ENCODE measurements at regions of chr13 and their contacts with region 1.

Region 1: DNA sequence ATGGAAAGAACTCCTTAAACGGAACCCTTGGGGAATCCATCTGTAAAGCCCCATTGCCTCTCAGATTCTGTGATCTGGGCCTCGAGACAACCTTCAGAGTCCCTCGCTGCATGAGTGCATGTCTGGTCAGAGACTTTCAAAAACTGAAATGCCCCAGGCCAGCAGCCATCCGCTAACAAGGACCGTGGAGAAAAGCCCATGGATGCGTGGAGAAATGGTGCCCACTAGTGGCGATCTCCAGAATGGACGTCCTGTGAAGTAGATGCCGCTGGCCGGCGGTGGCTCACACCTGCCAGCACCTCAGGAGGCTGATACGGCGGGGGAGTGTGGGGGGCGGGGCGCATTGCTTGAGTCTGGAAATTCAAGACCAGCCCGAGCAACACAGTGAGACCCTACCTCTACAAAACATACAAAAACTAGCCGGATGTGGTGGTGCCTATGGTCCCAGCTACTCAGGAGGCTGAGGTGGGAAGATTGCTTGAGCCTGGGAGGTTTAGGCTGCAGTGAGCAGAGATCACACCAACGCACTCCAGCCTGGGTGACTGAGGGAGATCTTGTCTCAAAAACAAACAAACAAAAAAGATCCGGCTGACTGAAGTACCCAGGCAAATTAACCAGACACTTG is 7.9 kb upstream of the CDC16 start:
- DNase-seq: peak; percentile 80 to 90
- ATAC-seq: peak; percentile 94 to 97 (median 96)
- H3K4me3 ChIP-seq: no peak overlapping the region
- H3K27ac ChIP-seq: no peak overlapping the region
- H3K4me1 ChIP-seq: peaks cover 3% of the 10 kb centered on the region
- H3K27me3 ChIP-seq: peaks cover 0 to 20% (median 2%) of the 10 kb centered on the region in 3 donors
- CTCF ChIP-seq: peak; percentile 90

Region 2: DNA sequence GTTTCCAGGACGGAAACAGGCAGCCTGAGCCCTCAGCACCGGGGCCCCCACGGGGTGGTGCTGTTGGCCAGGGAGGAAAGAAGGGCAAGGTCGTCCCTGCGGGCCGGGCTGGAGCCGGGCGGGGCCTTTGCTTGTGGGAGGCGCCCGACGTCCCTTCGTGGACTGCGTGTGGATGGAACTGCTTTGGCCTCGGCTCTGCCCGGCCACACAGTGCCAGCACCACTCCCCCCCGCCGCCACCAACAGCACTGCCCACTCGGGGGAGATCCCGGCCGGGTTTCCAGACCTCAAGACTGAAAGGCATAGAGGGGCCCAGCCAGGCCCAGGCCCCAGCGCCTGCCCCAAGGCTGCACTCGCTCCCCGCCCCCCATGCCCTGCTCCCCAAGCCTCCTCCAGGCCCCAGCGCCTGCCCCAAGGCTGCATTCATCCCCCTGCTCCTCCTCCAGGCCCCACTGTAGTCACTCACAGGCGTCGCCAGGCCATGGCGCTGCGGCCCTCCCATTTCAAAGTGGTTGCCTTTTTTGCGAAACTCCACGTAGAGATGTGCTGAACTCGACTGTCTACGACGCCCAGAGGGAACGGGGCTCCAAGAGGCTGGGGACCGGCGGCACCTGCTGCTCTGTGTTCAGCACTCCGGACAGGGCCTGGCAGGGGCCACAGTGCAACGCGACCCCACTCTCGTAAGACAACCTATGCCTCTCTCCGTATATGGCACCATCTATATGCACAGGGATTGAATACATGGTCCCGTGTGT is 275.4 kb before region 1 on chr13:
- intact Hi-C with region 1: loop called (anchors 1 to 2 kb)
- DNase-seq: peak; percentile 89 to 95
- ATAC-seq: peak; percentile 91 to 97 (median 94)
- H3K4me3 ChIP-seq: peak overlapping the region; percentile 38
- H3K27ac ChIP-seq: no peak overlapping the region
- H3K4me1 ChIP-seq: peaks cover 5% of the 10 kb centered on the region
- H3K27me3 ChIP-seq: no peaks in the 10 kb centered on the region
- CTCF ChIP-seq: peak; percentile 86

Region 3: GRCh38 chr13:113969973-113970611 is 256.7 kb before region 1 on chr13:
- intact Hi-C with region 1: loop called in 1 of 2 experiments (anchors 5 kb)
- DNase-seq: peak in 1 of 2 donors; percentile 36
- ATAC-seq: peak; percentile 12 to 24 (median 17)
- H3K4me3 ChIP-seq: no peak overlapping the region
- H3K27ac ChIP-seq: no peak overlapping the region
- H3K4me1 ChIP-seq: peaks cover 12% of the 10 kb centered on the region
- H3K27me3 ChIP-seq: no peaks in the 10 kb centered on the region
- CTCF ChIP-seq: no peak

Region 4: DNA sequence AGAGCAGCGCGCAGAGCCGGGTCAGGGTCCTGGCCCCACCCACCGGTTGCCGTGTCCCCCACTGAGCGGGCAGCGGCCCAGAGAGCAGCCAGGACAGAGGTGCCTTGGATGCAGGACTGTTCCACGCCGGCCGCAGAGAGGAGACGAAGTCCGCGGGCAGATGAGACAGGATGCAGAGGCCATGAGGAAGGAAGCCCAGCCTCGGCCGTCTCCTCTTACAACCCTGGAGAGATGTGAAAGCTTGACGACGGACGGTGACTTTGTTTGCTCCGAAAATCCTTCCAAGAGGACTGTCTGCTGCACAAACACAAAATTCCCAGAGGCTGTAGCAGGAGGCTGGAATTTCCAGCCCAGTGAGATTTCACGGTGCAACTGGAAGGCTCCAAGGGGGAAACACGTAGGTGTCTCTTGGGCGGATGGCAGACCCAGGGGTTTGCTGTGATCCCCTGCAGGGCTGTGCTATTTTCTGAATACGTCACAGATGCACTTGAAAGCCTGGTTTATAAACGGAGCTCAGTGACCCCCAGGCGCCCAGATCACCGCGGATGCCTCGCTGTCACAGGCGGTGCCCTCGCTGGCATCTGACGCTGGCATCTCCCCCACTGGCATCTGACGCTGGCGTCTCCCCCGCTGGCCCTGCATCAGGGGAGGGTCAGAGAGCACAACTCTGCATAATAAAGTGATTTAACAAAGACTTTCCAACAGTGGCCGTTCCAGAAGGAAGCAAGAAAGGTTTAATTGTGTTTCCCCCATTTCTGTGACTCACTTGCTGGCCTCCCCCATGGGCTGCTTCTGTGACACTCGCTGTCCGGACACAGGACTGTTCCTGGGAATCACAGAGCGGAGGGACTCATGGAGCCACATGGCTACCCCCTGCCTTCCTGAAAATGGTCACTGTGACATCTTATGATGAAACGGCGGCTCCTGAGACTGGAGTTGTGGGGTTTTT is 191.0 kb before region 1 on chr13:
- intact Hi-C with region 1: loop called in 1 of 2 experiments (anchors 5 kb)
- DNase-seq: peak in 1 of 2 donors; percentile 51
- ATAC-seq: peak; percentile 49 to 60 (median 52)
- H3K4me3 ChIP-seq: no peak overlapping the region
- H3K27ac ChIP-seq: peak overlapping the region; percentile 32
- H3K4me1 ChIP-seq: peaks cover 43% of the 10 kb centered on the region
- H3K27me3 ChIP-seq: no peaks in the 10 kb centered on the region
- CTCF ChIP-seq: no peak

Region 5: DNA sequence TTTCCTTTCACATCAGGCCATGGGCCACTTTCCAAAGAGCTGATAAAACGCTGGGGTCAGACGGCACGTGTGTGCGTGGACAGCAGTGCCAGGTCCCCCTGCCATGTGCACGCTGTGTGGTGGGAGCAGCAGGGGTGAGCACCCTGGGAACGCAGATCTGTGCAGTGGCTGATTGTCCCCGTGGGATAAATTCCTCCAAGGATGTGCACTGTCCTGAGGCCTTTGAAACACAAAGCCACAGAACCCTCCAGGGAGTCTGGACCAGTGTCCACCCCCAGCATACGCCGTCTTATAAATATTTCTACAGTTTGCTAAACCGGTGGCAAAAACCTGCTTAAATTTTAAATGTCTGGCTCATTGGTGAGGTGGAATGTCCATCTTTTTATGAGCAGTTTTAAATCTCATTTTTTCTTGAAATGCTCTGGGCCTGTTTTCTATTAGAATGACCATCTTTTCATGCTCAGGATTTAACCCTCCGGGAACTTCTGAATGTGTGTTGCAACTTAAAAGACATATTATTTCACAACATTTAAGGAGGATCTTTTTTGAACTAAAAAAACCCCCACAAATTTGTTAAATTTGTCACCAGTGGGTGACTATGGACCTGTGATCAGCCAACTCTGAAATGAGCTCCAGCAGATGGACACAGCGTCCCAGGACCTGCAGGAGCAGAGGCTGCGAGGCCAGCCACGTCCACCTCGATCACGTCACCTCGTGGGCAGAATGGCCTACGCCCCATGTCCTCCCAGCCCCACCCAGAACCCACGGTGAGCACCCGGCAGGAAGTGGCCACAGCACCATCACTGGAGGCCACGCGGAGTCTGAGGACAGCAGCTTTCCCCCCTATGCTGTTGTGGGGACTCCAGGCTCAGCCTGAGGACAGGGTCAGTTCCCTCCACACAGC is 163.0 kb before region 1 on chr13:
- intact Hi-C with region 1: no loop called
- DNase-seq: peak; percentile 81 to 87
- ATAC-seq: peak; percentile 16 to 53 (median 36)
- H3K4me3 ChIP-seq: peak overlapping the region; percentile 66
- H3K27ac ChIP-seq: peak overlapping the region; percentile 97
- H3K4me1 ChIP-seq: peaks cover 53% of the 10 kb centered on the region
- H3K27me3 ChIP-seq: no peaks in the 10 kb centered on the region
- CTCF ChIP-seq: no peak

Region 6: DNA sequence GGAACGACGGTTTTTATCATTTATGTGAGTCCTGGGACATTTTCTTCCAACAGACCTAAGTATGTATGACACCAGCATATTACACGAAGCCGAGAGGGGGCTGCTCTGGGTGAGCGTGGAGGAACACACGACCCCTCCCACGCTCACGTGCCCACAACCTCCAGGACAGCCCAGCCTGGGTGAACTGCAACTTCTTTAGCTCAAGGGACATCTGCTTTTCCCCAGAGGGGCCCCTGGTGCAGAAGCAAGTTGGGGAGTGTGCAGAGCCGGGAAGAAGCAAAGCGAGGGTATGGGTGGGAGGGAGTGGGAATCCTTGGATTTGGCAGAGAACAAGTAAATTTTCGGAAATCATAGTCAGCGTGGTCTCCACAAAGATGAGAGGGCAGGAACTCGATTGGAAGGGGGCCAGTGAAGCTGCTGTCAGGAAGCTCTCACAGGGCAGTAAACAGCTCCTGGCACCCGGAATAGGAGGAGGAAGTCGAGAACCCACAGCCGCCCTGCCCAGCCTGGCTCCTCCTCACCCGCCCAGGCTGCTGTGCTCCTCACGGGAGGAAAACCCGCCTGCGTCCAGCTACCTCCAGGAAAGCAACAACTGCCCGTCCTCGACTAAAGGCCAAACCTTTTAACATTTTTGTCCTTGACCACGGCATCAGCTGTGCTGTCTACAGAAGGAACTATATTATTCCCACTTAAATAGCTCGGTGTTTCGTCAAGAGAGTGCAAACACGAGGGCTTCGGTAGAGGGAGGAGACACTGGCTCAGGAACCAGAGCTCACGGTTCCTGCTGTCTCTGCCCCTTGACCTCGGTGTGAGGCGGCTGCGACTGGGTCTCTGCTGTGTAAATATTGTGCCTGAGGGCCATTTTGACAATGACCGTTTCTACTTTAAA is 64.9 kb before region 1 on chr13:
- intact Hi-C with region 1: no loop called
- DNase-seq: peak; percentile 43 to 66
- ATAC-seq: peak in 2 of 4 donors; percentile 48 to 64
- H3K4me3 ChIP-seq: no peak overlapping the region
- H3K27ac ChIP-seq: no peak overlapping the region
- H3K4me1 ChIP-seq: peaks cover 9% of the 10 kb centered on the region
- H3K27me3 ChIP-seq: peaks cover 0 to 12% (median 7%) of the 10 kb centered on the region in 3 donors
- CTCF ChIP-seq: no peak